H1 (cell line): ENCODE measurements at regions of chr19 and their contacts with region 1.

Region 1: DNA sequence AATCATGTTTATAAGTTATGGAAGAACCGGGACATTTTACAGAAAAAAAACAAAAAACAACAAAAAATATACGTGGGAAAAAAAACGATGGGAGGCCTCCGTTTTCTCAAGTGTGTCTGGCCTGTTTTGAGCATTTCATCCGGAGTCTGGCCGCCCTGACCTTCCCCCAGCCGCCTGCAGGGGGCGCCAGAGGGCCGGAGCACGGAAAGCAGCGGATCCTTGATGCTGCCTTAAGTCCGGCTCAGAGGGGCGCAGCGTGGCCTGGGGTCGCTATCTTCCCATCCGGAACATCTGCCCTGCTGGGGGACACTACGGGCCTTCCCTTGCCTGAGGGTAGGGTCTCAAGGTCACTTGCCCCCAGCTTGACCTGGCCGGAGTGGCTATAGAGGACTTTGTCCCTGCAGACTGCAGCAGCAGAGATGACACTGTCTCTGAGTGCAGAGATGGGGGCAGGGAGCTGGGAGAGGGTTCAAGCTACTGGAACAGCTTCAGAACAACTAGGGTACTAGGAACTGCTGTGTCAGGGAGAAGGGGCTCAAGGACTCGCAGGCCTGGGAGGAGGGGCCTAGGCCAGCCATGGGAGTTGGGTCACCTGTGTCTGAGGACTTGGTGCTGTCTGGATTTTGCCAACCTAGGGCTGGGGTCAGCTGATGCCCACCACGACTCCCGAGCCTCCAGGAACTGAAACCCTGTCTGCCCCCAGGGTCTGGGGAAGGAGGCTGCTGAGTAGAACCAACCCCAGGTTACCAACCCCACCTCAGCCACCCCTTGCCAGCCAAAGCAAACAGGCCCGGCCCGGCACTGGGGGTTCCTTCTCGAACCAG is 1.8 kb upstream of the APOE start:
- DNase-seq: peak; percentile 58 to 98
- H3K4me3 ChIP-seq: no peak overlapping the region
- H3K27ac ChIP-seq: no peak overlapping the region
- H3K4me1 ChIP-seq: peaks cover 0 to 8% (median 7%) of the 10 kb centered on the region in 4 experiments; a peak in 6 of 7 replicates
- H3K27me3 ChIP-seq: no peaks in the 10 kb centered on the region
- CTCF ChIP-seq: peak; percentile 94 to 95 (median 94)
- EP300 ChIP-seq: no peak
- POLR2A ChIP-seq: peak in 1 of 2 experiments; percentile 79; a peak in 2 of 3 replicates
- RAD21 ChIP-seq: peak; percentile 83 to 88

Region 2: GRCh38 chr19:44816301-44816700 is 87.5 kb before region 1 on chr19:
- CTCF ChIA-PET with region 1: no interaction called
- POLR2A ChIA-PET with region 1: no interaction called
- DNase-seq: no peak
- H3K4me3 ChIP-seq: no peak overlapping the region
- H3K27ac ChIP-seq: no peak overlapping the region
- H3K4me1 ChIP-seq: no peaks in the 10 kb centered on the region; a peak in 1 of 7 replicates
- H3K27me3 ChIP-seq: no peaks in the 10 kb centered on the region; a peak in 3 of 7 replicates
- CTCF ChIP-seq: no peak
- EP300 ChIP-seq: no peak
- POLR2A ChIP-seq: no peak
- RAD21 ChIP-seq: no peak

Region 3: GRCh38 chr19:44883922-44884321 is 19.9 kb before region 1 on chr19:
- CTCF ChIA-PET with region 1: interaction called, 7 read pairs
- POLR2A ChIA-PET with region 1: interaction called, 247 read pairs
- DNase-seq: no peak
- H3K4me3 ChIP-seq: no peak overlapping the region
- H3K27ac ChIP-seq: no peak overlapping the region
- H3K4me1 ChIP-seq: peaks cover 0 to 11% (median 1%) of the 10 kb centered on the region in 4 experiments; a peak in 3 of 7 replicates
- H3K27me3 ChIP-seq: no peaks in the 10 kb centered on the region
- CTCF ChIP-seq: no peak
- EP300 ChIP-seq: no peak
- POLR2A ChIP-seq: no peak
- RAD21 ChIP-seq: no peak

Region 4: DNA sequence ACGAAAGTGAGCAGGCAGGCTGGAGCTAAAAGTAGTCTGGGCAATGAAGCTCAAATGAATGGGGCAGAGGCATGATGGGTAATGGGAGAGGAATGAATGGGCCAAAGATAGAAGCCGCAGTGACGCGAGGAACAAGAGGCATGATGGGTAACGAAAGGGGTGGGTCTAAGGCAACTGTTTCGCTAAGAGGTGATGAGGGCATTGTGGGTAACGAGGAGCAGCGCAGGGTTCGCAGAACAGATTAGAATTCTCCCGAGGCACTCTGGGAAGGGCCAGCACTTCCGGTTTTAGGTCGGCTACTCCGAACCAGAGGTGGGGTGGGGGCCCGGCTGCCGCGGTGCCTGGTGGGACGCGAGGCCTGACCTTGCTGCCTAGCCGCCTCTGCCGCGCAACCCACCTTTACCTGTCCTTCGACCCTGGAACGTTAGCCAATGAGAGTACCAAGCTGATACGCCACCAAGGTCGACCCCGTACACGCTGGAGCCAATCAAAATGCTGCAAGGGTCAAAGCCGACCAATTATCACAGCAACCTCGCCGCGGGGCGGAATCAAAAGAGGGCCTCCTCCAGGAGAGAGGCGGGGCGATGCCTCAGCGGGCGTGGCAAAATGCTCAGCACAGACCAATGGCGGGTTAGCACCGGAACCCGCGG is 13.3 kb before region 1 on chr19:
- CTCF ChIA-PET with region 1: interaction called, 17 read pairs
- POLR2A ChIA-PET with region 1: interaction called, 247 read pairs
- DNase-seq: peak; percentile 99
- H3K4me3 ChIP-seq: peak overlapping the region; percentile 28 to 58 (median 48); a peak in 7 of 8 replicates
- H3K27ac ChIP-seq: peak overlapping the region; percentile 74; the same call in 1 of the 2 replicates
- H3K4me1 ChIP-seq: peaks cover 5 to 8% (median 7%) of the 10 kb centered on the region in 4 experiments
- H3K27me3 ChIP-seq: no peaks in the 10 kb centered on the region
- CTCF ChIP-seq: no peak
- EP300 ChIP-seq: no peak
- POLR2A ChIP-seq: peak; percentile 83 to 92
- RAD21 ChIP-seq: no peak

Region 5: DNA sequence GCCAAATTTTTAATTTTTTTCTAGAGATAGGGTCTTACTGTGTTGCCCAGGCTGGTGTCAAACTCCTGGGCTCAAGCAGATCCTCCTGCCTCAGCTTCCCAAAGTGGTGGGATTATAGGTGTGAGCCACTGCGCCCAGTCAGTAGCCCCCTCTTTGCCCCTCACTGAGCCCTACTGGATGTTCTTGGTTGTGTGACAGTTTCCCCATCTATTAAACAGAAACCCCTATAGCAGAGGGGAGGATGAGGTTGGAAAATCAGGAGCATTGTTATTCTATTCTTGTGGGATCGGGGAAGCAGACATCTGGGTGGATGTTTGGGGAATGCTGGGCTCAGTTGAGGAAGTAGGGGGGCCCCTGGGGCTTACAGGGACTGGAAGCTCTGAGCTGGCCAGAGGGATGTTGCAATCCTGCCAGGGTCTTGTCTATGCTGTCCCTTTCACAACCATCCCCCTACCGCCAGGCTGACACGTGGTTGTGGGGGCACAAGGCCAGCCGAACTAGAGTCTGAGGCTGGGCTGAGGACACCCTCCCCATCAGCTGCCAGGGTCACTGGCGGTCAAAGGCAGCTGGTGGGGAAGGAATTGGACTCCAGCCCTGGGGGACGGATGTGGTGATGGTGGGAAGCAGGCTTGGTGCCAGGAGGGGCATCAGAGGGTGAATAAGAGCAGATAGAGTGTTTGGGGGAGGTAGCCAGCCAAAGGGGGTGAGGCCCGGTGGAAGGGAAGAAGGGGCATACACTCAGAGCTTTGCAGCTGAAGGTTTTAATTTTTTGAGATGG is 21.5 kb after region 1 on chr19:
- CTCF ChIA-PET with region 1: interaction called, 6 read pairs
- POLR2A ChIA-PET with region 1: interaction called, 14 read pairs
- DNase-seq: no peak
- H3K4me3 ChIP-seq: no peak overlapping the region
- H3K27ac ChIP-seq: no peak overlapping the region
- H3K4me1 ChIP-seq: peaks cover 0 to 5% (median 0%) of the 10 kb centered on the region in 4 experiments; a peak in 2 of 7 replicates
- H3K27me3 ChIP-seq: peaks cover 0 to 1% (median 0%) of the 10 kb centered on the region in 4 experiments; a peak in 1 of 7 replicates
- CTCF ChIP-seq: no peak
- EP300 ChIP-seq: no peak
- POLR2A ChIP-seq: no peak
- RAD21 ChIP-seq: no peak